Activated B cell treated with CpG ODN at 0.5 μM for 24 hours (primary cell): ENCODE measurements at regions of chr16 and their contacts with region 1.

Region 1: DNA sequence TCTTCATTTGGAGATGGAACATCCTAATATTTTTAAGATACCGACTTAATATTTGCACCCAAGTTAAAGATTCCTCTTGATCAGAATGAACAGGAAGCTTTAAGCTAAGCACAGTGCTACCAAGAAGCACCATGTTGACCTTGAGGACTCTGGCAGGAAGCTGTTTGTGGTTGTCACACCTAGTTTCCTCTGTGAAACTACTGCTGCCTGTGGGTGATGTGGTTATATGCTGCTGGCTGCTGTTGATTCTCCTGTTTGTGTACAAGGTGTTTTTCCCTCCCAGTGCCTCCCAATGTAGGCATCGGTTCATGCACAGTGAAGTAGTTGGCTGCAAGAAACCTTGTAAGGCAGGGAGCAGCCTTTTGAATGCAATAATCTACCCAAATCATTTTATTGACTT is 23.4 kb downstream of the RBL2 start:
- DNase-seq: no peak
- ATAC-seq: peak; percentile 92
- H3K4me3 Mint-ChIP-seq: peak overlapping the region; percentile 50
- H3K27ac Mint-ChIP-seq: peak overlapping the region; percentile 57
- H3K4me1 Mint-ChIP-seq: peaks cover 28% of the 10 kb centered on the region
- H3K27me3 Mint-ChIP-seq: no peaks in the 10 kb centered on the region
- CTCF ChIP-seq: no peak

Region 2: GRCh38 chr16:53220585-53220984 is 237.1 kb before region 1 on chr16:
- CTCF ChIA-PET with region 1: no interaction called
- POLR2A ChIA-PET with region 1: no interaction called
- intact Hi-C with region 1: loop called (anchors 10 kb)
- DNase-seq: no peak
- ATAC-seq: peak; percentile 60
- H3K4me3 Mint-ChIP-seq: no peak overlapping the region
- H3K27ac Mint-ChIP-seq: no peak overlapping the region
- H3K4me1 Mint-ChIP-seq: peaks cover 14% of the 10 kb centered on the region
- H3K27me3 Mint-ChIP-seq: no peaks in the 10 kb centered on the region
- CTCF ChIP-seq: no peak

Region 3: DNA sequence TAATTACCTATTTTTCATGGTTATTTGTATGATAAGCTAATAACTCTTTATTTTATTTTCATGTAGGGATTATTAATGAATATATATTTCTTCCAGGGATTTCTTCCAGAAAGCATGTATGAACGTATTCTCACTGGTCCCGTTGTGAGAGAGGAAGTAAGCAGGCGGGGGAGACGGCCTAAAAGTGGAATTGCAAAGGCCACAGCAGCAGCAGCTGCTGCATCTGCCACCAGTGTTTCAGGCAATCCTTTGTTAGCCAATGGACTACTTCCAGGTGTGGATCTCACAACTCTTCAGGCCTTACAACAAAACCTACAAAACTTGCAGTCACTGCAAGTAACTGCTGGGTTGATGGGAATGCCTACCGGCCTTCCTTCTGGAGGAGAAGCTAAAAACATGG is 133.7 kb before region 1 on chr16:
- CTCF ChIA-PET with region 1: no interaction called
- POLR2A ChIA-PET with region 1: no interaction called
- intact Hi-C with region 1: loop called (anchors 10 kb)
- DNase-seq: no peak
- ATAC-seq: no peak
- H3K4me3 Mint-ChIP-seq: no peak overlapping the region
- H3K27ac Mint-ChIP-seq: no peak overlapping the region
- H3K4me1 Mint-ChIP-seq: no peaks in the 10 kb centered on the region
- H3K27me3 Mint-ChIP-seq: no peaks in the 10 kb centered on the region
- CTCF ChIP-seq: no peak